HEK293T (cell line): ENCODE measurements at regions of chr5 and their contacts with region 1.

Region 1: GRCh38 chr5:135410348-135410747 is 11.3 kb upstream of the MACROH2A1 start:
- DNase-seq: no peak

Region 2: DNA sequence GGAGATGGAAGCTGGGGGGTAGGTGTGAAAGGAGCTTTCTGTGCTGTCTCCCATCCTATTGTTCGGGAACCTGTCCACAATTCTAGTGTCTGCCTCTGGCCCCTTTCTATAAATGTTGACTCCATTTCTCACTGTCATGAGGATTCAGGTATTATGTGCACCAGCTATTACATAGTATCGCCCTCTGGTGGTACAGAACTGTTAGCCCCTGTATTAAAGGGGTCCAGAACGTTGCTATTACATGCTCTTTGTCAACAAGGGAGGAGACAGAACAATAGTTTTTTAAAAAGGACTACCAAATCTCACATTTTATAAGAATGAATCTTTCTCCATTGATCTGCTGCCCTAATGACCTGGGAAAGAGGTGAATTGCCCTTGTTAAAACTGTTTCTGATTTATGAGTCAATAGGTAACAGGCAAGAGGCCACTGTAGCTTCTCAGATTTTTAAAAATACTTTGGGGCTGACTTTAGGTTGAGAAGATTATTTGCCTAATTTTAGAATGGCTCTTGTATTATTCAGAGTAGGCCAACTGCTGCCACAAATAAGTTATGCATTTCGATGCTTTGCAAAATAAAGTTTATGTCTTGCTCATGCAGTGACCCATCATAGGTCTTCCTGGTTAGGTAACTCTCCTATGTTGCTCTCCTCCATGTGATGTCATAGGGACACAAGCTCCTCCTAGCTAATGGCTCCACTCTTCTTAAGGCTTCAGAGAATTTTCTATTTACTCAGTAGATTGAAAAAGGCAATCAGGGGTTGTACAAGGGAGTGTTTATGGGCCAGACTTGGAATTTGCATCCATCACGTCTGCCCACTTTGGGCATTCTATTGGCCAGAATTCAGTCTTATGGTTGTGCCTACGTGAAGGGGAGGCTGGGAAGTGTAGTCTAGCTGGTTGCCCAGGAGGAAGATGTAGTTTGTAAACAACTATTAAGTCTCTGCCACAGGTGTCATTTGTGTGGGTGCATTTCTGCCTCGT is 16.0 kb after region 1 on chr5:
- CTCF ChIA-PET with region 1: interaction called, 17 read pairs
- POLR2A ChIA-PET with region 1: no interaction called
- DNase-seq: peak; percentile 62